Activated naive CD4-positive, alpha-beta T cell treated with anti-CD3 and anti-CD28 coated beads, Interleukin-2, amount 10 ng/mL, durations not matched to agents 7 days and 5 days (primary cell): ENCODE measurements at regions of chr20 and their contacts with region 1.

Region 1: GRCh38 chr20:45963059-45964005 is 8.7 kb downstream of the ZNF335 start:
- DNase-seq: peak; percentile 16
- H3K4me3 Mint-ChIP-seq: no peak overlapping the region
- H3K27ac Mint-ChIP-seq: no peak overlapping the region
- H3K4me1 Mint-ChIP-seq: no peaks in the 10 kb centered on the region
- H3K27me3 Mint-ChIP-seq: no peaks in the 10 kb centered on the region

Region 2: DNA sequence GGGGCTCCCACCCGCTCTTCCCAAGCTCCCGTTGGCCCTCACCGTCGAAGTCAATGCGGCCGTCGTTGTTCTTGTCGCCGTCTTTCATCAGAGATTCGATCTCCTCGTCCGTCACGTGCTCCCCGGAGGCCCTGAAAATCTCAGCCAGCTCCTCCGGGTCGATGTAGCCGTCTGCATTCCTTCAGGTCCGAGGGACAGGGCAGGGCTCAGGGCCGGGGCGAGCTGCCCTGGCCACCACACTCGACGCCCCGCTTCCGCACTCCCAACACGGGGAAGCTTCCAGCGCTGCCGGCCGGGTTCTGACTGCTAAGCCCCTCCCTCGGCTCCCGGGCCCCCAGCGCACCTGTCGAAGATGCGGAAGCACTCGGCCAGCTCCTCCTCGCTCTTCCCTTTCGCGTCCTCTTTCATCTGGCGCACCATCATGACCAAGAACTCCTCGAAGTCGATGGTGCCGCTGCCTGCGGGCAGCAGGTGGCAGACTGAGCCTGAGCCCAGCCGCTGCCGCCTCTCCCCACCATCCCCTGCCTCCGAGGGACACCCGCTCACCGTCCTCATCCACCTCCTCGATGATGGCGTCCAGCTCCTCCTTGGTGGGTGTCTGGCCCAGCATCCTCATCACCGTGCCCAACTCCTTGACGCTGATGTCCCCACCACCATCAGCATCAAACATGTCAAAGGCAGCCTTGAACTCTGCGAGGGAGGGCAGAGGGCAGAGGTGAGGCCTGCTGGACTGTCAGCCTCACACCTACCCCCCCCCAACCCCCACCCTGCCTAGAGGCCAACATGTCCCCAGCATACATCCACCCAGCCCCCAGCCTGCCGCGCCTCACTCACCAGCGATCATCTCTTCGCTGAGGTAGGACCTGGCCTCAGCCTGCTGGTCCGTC is 139.1 kb before region 1 on chr20:
- CTCF ChIA-PET with region 1: interaction called, 12 read pairs
- DNase-seq: peak; percentile 72
- H3K4me3 Mint-ChIP-seq: peak overlapping the region; percentile 34
- H3K27ac Mint-ChIP-seq: no peak overlapping the region
- H3K4me1 Mint-ChIP-seq: peaks cover 18% of the 10 kb centered on the region
- H3K27me3 Mint-ChIP-seq: peaks cover 64% of the 10 kb centered on the region

Region 3: DNA sequence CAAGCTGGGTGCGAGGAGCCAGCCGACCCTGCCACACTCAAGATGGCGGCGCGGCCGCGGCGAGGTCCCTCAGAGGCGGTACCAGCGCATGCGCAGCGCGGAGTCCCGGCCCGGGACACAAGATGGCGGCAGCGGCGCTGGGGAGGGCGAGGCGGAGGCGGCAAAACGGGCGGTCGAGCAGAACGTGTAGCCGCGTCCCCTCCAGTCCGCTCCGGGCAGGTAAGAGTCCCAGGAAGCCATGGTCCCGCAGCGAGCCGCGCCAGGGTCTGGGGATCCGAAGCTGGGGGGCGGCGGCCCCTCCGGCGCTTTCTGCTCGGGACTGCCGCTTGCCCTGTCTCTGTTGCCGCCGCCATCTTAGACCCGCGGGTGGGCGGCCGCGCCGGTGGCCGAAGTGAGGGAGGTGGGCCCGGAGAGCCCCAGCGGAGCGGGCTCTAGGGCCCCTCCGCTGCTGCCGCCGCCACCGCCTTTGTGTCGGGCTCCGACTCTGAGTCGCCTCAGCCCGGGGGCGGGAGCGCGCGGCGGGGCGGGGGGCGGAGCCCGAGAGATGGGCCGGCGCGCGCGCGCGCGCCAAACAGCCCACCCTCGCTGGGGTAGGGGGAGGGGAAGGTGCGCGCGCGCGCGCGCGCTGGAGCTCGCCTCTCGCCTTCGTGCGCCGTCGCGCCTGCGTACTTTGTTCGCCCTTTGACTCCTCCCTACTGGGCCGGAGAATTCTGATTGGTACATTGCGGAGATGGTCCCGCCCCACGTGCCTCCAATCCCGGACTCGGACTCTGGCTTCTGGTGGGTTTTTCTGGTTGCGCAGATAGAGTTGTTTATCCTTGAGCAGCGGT is 28.5 kb before region 1 on chr20 and contains the start of gene PCIF1:
- CTCF ChIA-PET with region 1: interaction called, 13 read pairs
- DNase-seq: peak; percentile 98
- H3K4me3 Mint-ChIP-seq: peak within 1 kb of the TSS; percentile 99
- H3K27ac Mint-ChIP-seq: peak within 1 kb of the TSS; percentile 97
- H3K4me1 Mint-ChIP-seq: peaks cover 37% of the 10 kb centered on the region
- H3K27me3 Mint-ChIP-seq: no peaks in the 10 kb centered on the region